MCF 10A (cell line): ENCODE measurements at regions of chr7 and their contacts with region 1.

Region 1: DNA sequence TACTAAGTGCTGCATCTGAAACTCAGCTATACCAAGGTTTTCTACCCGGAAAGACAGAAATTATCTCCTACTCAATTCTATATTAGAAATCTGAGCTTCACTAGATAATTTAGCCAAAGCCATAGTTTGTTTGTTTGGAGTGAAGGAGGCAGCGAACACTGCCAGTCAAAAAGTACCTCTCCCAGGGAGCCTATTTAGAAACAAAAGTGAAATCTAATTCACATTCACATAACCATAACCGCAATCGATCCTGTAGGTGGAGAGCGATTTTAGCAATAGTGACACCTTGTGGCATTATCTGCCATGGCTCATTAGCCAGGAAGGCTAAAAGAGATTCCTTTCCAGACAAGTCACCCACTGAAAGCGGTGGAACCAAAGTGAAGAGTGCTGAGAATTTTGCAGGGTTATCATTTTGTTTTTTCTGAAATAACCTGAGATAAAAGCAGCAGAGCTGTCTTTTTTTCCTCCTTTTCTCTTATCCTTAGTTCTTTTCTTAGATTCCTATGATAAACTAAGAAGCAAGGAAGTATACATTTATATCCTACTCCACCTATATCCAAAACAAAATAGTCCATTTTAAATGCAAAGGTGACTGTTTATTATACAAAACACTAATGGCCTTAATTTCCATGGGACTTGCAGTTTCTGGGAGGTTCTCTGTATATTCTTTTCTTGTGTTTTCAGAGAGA is 83.7 kb upstream of the BET1 start:
- DNase-seq: peak; percentile 82
- H3K4me3 Mint-ChIP-seq: peak overlapping the region; percentile 37
- H3K27ac Mint-ChIP-seq: no peak overlapping the region
- H3K4me1 Mint-ChIP-seq: peaks cover 6% of the 10 kb centered on the region
- H3K27me3 Mint-ChIP-seq: no peaks in the 10 kb centered on the region
- CTCF ChIP-seq: peak; percentile 73

Region 2: DNA sequence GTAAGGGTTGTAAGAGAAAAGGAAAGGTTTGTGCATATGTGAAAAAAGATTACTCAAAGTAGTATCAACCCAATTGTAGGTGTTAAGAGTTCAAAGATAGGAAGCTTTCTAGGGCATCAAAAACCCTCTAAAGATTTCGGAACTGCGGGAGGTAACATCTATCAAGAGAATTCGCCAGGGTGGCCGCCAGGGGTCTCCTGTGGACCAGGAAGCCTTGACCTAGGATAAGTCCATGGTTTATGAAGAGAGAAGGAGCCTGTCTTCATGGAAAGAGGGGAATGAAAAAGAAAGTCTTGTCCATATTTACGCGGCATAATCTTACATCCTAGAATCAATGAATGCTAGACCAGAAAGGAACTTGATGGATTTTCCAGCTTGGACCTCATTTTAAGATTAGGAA is 372.6 kb before region 1 on chr7:
- CTCF ChIA-PET with region 1: interaction called, 5 read pairs
- POLR2A ChIA-PET with region 1: no interaction called
- intact Hi-C with region 1: loop called (anchors 1 kb)
- DNase-seq: peak; percentile 54
- H3K4me3 Mint-ChIP-seq: no peak overlapping the region
- H3K27ac Mint-ChIP-seq: no peak overlapping the region
- H3K4me1 Mint-ChIP-seq: peaks cover 18% of the 10 kb centered on the region
- H3K27me3 Mint-ChIP-seq: peaks cover 74% of the 10 kb centered on the region
- CTCF ChIP-seq: peak; percentile 48

Region 3: GRCh38 chr7:93902777-93903423 is 184.9 kb before region 1 on chr7:
- CTCF ChIA-PET with region 1: interaction called, 16 read pairs
- POLR2A ChIA-PET with region 1: interaction called, 4 read pairs
- intact Hi-C with region 1: loop called (anchors 1 kb)
- DNase-seq: peak; percentile 68
- H3K4me3 Mint-ChIP-seq: no peak overlapping the region
- H3K27ac Mint-ChIP-seq: no peak overlapping the region
- H3K4me1 Mint-ChIP-seq: no peaks in the 10 kb centered on the region
- H3K27me3 Mint-ChIP-seq: no peaks in the 10 kb centered on the region
- CTCF ChIP-seq: peak; percentile 80

Region 4: GRCh38 chr7:94004024-94004951 is 83.5 kb before region 1 on chr7 and contains the start of gene BET1:
- CTCF ChIA-PET with region 1: interaction called, 8 read pairs
- POLR2A ChIA-PET with region 1: no interaction called
- intact Hi-C with region 1: loop called (anchors 1 kb)
- DNase-seq: peak; percentile 98
- H3K4me3 Mint-ChIP-seq: peak within 1 kb of the TSS; percentile 100
- H3K27ac Mint-ChIP-seq: peak within 1 kb of the TSS; percentile 100
- H3K4me1 Mint-ChIP-seq: peaks cover 19% of the 10 kb centered on the region
- H3K27me3 Mint-ChIP-seq: no peaks in the 10 kb centered on the region
- CTCF ChIP-seq: no peak
- total RNA-seq, gene BET1: 54.4 and 72.7 TPM in 2 replicates

Region 5: GRCh38 chr7:94100723-94101345 is 13.0 kb after region 1 on chr7:
- CTCF ChIA-PET with region 1: interaction called, 14 read pairs
- POLR2A ChIA-PET with region 1: no interaction called
- intact Hi-C with region 1: no loop called
- DNase-seq: no peak
- H3K4me3 Mint-ChIP-seq: no peak overlapping the region
- H3K27ac Mint-ChIP-seq: no peak overlapping the region
- H3K4me1 Mint-ChIP-seq: peaks cover 7% of the 10 kb centered on the region
- H3K27me3 Mint-ChIP-seq: no peaks in the 10 kb centered on the region
- CTCF ChIP-seq: no peak